ENCODE measurements at regions of chr3 and their contacts with region 1.

Region 1: DNA sequence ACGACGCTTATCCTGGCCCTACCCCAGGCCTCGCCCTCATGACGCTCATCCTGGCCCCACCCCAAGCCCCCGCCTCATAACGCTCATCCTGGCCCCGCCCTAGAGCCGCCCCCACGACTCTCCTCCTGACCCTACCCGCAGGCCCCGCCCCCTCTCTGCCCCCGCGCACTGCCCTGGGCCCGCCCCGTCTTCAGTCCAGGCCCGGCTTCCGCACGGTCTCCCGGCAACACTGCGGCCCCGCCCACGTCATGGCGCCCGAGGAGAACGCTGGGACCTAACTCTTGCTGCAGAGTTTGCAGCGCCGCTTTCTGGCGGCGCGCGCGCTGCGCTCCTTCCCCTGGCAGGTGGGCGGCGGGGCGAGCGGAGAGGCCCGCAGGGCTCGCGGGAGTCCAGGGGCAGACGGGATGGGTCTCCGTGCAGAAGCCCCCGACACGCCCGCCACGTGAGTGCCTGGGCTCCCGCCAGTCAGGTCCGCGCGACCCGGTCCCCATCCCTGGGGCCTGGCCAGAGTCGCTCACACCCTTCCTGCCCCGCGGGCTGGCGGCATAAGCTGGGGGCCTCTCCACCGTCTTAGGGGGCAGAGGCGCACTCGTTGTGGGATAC is 52.5 kb upstream of the ROPN1B start:
- DNase-seq: peak; percentile 92 to 97 (median 96)
- H3K4me3 ChIP-seq: peak overlapping the region; percentile 24 to 93 (median 77)
- H3K27ac ChIP-seq: peak overlapping the region in 52 of 59 donors; percentile 8 to 92 (median 75)
- H3K27me3 ChIP-seq: no peaks in the 10 kb centered on the region
- CTCF ChIP-seq: peak in 39 of 56 donors; percentile 20 to 69 (median 45)

Region 2: DNA sequence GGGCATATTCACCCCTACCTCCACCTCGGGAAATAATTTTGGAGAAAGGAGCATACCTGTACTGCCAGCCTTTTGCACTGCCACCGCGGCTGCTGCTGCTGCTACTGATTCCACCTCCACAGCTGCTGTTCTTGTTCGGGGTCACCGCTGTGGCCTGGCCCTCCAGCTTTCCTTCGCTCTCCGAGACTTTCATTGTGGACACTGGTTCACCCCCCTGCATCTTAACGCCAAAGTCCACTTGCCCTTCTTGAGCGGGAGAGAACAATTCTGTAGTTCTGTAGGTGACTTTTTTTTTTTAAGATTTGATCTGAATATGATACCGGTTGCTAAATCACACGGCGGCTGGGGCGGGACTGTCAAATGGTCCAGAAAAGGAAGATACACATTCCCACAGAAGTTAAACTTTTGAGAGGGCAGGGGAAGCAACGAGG is 321.9 kb before region 1 on chr3:
- intact Hi-C with region 1: loop called in 1 of 2 experiments (anchors 10 kb)
- DNase-seq: peak in 1 of 10 donors; percentile 5
- H3K4me3 ChIP-seq: peak overlapping the region; percentile 51 to 98 (median 87)
- H3K27ac ChIP-seq: peak overlapping the region; percentile 30 to 96 (median 91)
- H3K27me3 ChIP-seq: no peaks in the 10 kb centered on the region
- CTCF ChIP-seq: no peak

Region 3: GRCh38 chr3:125767641-125768040 is 148.8 kb before region 1 on chr3:
- intact Hi-C with region 1: loop called (anchors 10 kb)
- DNase-seq: no peak
- H3K4me3 ChIP-seq: peak overlapping the region in 28 of 59 donors; percentile 7 to 78 (median 65)
- H3K27ac ChIP-seq: no peak overlapping the region
- H3K27me3 ChIP-seq: peaks cover 0 to 4% (median 0%) of the 10 kb centered on the region in 45 donors
- CTCF ChIP-seq: no peak

Region 4: GRCh38 chr3:125990253-125990970 is 73.9 kb after region 1 on chr3:
- intact Hi-C with region 1: no loop called
- DNase-seq: peak in 9 of 10 donors; percentile 44 to 92 (median 83)
- H3K4me3 ChIP-seq: peak overlapping the region in 58 of 59 donors; percentile 16 to 87 (median 66)
- H3K27ac ChIP-seq: peak overlapping the region in 40 of 59 donors; percentile 1 to 89 (median 58)
- H3K27me3 ChIP-seq: peaks cover 0 to 3% (median 0%) of the 10 kb centered on the region in 45 donors
- CTCF ChIP-seq: peak in 3 of 56 donors; percentile 5 to 17 (median 17)

Region 5: GRCh38 chr3:126056681-126057546 is 140.4 kb after region 1 on chr3:
- intact Hi-C with region 1: no loop called
- DNase-seq: peak in 4 of 10 donors; percentile 38 to 80 (median 60)
- H3K4me3 ChIP-seq: no peak overlapping the region
- H3K27ac ChIP-seq: peak overlapping the region in 35 of 59 donors; percentile 2 to 81 (median 36)
- H3K27me3 ChIP-seq: no peaks in the 10 kb centered on the region
- CTCF ChIP-seq: no peak

Region 6: GRCh38 chr3:126083913-126084767 is 167.7 kb after region 1 on chr3 and contains the start of gene SLC41A3:
- intact Hi-C with region 1: loop called in 1 of 2 experiments (anchors 10 kb)
- DNase-seq: peak; percentile 64 to 91 (median 76)
- H3K4me3 ChIP-seq: peak within 1 kb of the TSS; percentile 54 to 92 (median 84)
- H3K27ac ChIP-seq: peak within 1 kb of the TSS in 58 of 59 donors; percentile 31 to 94 (median 84)
- H3K27me3 ChIP-seq: no peaks in the 10 kb centered on the region
- CTCF ChIP-seq: peak in 40 of 56 donors; percentile 8 to 54 (median 36)
- total RNA-seq, gene SLC41A3: 47.0 to 128 (median 96.7) TPM